ENCODE measurements at regions of chr9 and their contacts with region 1.

Region 1: GRCh38 chr9:34500623-34501267 is 22.0 kb downstream of the ENHO start:
- DNase-seq: no peak
- ATAC-seq: peak; percentile 79
- H3K4me3 ChIP-seq: no peak overlapping the region
- H3K27ac ChIP-seq: no peak overlapping the region
- H3K4me1 ChIP-seq: peaks cover 7% of the 10 kb centered on the region
- H3K27me3 ChIP-seq: no peaks in the 10 kb centered on the region
- CTCF ChIP-seq: peak; percentile 97

Region 2: DNA sequence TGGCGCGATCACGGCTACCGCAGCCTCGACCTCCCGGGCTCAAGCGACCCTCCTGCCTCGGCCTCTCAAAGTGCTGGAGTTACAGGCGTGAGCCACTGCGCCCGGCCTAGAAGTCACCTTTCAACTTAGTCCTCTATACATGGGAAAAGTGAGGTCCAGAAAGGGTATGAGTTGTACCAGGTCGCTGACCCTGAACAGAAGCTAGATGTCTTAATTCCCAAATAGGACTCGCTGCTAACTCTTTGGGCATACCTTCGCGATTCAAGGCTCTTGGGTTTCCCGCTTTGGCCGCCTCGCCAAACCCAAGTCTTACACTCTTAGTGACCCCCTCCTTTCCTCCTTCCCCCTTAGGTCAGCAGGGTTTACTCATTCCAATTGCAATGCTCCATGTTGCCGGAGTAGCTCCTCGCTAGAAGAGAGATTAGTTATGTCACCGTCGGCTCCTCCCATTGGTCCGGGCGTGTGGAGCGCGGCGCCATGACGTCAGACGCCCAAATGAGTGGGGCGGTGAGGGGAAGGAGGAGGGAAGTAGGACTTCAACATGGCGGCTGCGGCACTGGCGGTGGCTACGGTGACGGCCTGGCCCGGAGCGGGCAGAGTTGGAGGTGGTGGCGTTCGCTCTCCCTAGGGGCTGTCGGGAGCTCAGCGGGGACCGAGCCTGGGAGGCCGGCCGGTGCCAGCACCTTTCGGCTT is 322.1 kb before region 1 on chr9 and contains the start of gene UBAP1:
- intact Hi-C with region 1: no loop called
- DNase-seq: peak; percentile 98
- ATAC-seq: peak; percentile 99
- H3K4me3 ChIP-seq: peak within 1 kb of the TSS; percentile 88
- H3K27ac ChIP-seq: peak within 1 kb of the TSS; percentile 96
- H3K4me1 ChIP-seq: peaks cover 11% of the 10 kb centered on the region
- H3K27me3 ChIP-seq: no peaks in the 10 kb centered on the region
- CTCF ChIP-seq: no peak
- total RNA-seq, gene UBAP1: 51.9 TPM

Region 3: GRCh38 chr9:34413231-34413852 is 87.4 kb before region 1 on chr9:
- intact Hi-C with region 1: loop called (anchors 10 kb)
- DNase-seq: no peak
- ATAC-seq: peak; percentile 45
- H3K4me3 ChIP-seq: no peak overlapping the region
- H3K27ac ChIP-seq: no peak overlapping the region
- H3K4me1 ChIP-seq: no peaks in the 10 kb centered on the region
- H3K27me3 ChIP-seq: no peaks in the 10 kb centered on the region
- CTCF ChIP-seq: no peak